Endothelial cell of umbilical vein (primary cell): ENCODE measurements at regions of chr11 and their contacts with region 1.

Region 1: DNA sequence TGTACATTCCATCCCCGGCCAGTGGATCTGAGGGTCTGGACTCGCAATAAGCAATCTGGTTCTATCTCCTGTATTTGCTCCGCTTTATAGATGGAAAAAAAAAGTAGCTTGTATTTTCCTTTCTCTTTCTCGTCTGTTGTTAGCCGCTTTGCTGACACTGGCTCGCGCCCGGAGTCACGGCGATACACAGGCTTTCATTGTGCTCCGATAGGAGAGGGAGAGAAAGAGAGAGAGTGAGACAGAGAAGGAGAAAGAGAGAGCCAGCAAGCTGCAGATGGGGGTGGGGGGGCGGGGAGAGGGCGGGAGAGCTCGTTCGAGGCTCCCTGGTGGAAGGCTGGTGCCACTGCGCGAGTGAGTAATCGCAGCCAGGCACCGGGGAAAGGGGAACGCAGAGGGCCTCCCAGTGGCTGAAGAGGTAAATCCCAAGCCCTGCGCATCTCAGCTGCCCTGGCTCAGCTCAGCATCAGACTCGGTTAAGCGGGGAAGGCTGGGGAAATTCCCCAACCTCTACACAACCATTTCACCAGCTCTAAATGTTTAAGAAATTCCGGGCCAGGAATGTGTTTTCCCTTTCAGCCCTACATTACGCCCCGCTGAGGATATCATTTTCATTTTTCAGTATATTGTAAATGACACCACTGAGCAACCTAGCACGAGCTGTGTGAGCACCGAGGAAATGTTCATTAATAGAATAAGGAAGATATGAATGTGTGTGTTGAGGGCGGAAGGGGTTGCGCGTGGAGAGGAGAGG is at the start of gene MAML2:
- DNase-seq: peak; percentile 91
- H3K4me3 ChIP-seq: peak within 1 kb of the TSS; percentile 59 to 98 (median 94)
- H3K27ac ChIP-seq: peak within 1 kb of the TSS; percentile 88
- H3K4me1 ChIP-seq: peaks cover 30% of the 10 kb centered on the region
- H3K27me3 ChIP-seq: no peaks in the 10 kb centered on the region
- CTCF ChIP-seq: peak; percentile 76 to 96
- POLR2A ChIP-seq: no peak
- total RNA-seq, gene MAML2: 16.8 and 17.1 TPM in 2 replicates

Region 2: DNA sequence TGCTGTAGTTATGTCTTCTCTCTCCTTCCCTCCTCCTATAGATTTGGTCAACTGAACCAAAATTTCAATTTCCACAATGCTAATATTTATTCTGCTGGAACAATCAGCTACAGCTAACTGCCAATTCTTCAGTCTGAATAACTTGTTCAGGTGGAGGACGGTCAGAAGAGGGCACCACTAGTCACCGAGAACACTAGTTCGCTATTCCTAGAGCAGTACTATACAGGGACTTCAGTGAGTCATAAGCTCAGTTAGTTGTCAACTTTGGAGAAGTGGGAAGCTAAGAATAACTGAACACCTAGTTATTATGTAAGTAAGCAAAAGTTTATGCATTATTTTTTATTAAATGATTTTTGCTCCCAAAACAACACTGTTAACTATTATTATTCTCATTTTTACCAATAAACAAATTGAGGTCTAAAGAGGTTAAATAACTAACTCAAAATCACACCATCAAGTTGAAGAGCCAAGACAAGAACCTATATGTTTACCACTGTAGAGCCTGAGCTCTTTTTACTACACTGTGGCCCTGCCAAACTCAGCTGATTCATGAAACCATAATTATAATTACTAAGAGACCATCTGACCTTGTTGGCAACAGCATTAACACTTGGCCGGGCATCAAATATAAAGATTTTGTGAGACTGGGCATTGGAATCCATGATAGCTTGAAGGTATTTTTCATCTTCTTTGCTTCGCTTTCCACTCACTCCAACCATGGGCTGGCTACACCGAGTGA is 493.9 kb before region 1 on chr11:
- CTCF ChIA-PET with region 1: interaction called, 82 read pairs
- POLR2A ChIA-PET with region 1: no interaction called
- dilution Hi-C with region 1: no loop called
- intact Hi-C with region 1: loop called (anchors 1 kb)
- DNase-seq: peak; percentile 82
- H3K4me3 ChIP-seq: no peak overlapping the region
- H3K27ac ChIP-seq: no peak overlapping the region
- H3K4me1 ChIP-seq: no peaks in the 10 kb centered on the region
- H3K27me3 ChIP-seq: no peaks in the 10 kb centered on the region
- CTCF ChIP-seq: peak; percentile 46 to 54
- POLR2A ChIP-seq: no peak

Region 3: DNA sequence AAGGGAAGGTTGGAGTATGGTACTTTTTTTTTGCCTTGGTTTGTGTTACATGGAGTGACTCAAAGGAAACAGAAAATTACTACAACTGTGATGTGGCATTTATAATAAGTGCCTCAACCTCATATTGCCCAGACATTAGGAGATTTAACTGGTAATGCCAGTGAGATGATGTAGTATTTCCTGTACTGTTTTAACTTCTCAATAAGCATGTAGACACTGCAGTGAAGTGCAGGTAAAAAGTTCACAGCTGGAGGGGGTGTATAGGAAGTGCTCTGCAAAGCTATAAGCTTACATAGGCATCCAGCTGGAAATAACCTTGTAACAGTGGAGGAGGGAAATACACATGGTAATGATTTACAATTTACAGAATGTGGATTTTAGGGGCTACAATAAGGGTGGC is 281.0 kb before region 1 on chr11:
- CTCF ChIA-PET with region 1: interaction called, 215 read pairs
- POLR2A ChIA-PET with region 1: interaction called, 6 read pairs
- dilution Hi-C with region 1: no loop called
- intact Hi-C with region 1: no loop called
- DNase-seq: peak; percentile 66
- H3K4me3 ChIP-seq: no peak overlapping the region
- H3K27ac ChIP-seq: peak overlapping the region; percentile 42
- H3K4me1 ChIP-seq: peaks cover 17% of the 10 kb centered on the region
- H3K27me3 ChIP-seq: no peaks in the 10 kb centered on the region
- CTCF ChIP-seq: no peak
- POLR2A ChIP-seq: no peak

Region 4: DNA sequence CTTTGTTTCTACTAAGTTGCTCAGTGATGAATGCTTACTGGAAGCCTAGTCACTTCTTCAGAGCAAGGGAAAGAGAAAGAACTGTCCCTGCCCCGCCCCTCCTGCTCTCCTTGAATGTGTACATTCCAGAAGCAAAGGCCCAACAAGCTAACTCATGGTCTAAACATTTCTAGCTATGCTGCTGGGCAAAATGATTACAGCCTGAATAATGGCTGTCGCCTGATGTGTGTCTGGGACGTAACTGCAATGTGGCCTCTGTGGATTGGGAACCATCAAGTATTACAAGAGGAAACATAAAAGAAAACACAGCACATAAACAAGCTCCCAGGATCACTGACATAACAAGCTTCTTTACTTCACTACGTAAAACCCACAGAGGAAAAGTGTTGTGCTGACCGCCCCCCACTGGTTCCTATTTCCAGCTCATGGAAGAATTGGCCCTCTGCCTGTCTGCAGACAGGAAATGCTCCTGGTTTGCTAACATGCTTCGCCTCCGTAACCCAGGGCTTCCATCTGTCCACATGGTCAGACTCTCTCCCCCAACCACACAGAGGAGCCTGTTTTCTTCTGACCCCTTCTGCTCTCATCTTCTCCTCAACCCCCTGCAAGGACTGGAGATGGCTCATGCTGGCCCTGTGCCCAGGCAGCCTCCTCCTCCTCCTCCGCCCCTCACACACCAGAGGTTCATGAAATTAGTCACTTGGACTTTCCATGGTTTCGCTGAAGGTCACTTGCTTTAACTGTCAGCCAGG is 187.3 kb before region 1 on chr11:
- CTCF ChIA-PET with region 1: interaction called, 8 read pairs
- POLR2A ChIA-PET with region 1: interaction called, 8 read pairs
- dilution Hi-C with region 1: no loop called
- intact Hi-C with region 1: loop called (anchors 1 kb)
- DNase-seq: peak; percentile 92
- H3K4me3 ChIP-seq: no peak overlapping the region
- H3K27ac ChIP-seq: peak overlapping the region; percentile 93
- H3K4me1 ChIP-seq: peaks cover 38% of the 10 kb centered on the region
- H3K27me3 ChIP-seq: no peaks in the 10 kb centered on the region
- CTCF ChIP-seq: peak; percentile 29 to 30
- POLR2A ChIP-seq: no peak

Region 5: GRCh38 chr11:96215110-96215782 is 127.9 kb before region 1 on chr11:
- CTCF ChIA-PET with region 1: interaction called, 28 read pairs
- POLR2A ChIA-PET with region 1: no interaction called
- dilution Hi-C with region 1: no loop called
- intact Hi-C with region 1: no loop called
- DNase-seq: peak; percentile 81
- H3K4me3 ChIP-seq: peak overlapping the region in 1 of 3 experiments; percentile 4
- H3K27ac ChIP-seq: peak overlapping the region; percentile 92
- H3K4me1 ChIP-seq: peaks cover 66% of the 10 kb centered on the region
- H3K27me3 ChIP-seq: no peaks in the 10 kb centered on the region
- CTCF ChIP-seq: no peak
- POLR2A ChIP-seq: peak; percentile 38

Region 6: DNA sequence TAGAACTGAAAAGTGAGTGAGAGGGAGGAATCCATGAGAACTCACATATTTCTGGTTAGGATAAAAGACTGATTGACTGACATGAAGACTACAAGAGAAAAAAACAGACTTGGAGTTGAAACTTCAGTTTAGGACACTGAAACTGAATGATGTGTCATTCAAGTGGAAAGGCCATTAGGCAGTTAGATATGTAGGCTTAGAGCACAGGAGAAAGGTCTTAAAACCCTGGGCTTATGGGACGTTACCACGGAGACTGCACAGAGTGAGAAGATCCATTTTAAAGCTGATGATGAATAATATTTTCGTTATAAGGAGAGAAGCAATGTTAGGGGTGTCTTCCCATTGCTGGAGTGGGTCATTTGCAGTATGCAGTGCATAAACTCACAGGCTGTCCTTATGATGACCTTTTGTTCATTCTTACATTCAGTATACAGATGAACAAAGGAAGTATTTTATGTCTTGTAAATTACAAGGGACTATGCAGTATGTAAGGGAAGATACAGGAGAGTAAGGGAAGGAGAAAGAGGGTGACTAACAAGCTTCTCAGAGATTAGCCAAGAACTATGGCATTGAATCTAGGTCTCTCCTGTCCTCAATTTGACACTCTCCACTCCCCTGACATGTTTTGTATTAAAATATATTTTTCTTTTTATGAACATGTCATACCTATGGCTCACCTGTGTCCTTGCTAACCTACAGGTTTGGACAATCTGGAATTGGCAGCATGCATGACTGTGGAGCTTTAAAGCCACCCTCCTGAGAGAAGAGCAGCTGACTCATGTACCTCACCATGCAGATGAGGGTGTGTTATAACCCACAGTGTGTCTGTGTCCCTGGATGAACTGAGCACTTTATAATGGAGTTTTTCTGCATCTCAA is 63.9 kb before region 1 on chr11:
- CTCF ChIA-PET with region 1: interaction called, 13 read pairs
- POLR2A ChIA-PET with region 1: no interaction called
- dilution Hi-C with region 1: no loop called
- intact Hi-C with region 1: no loop called
- DNase-seq: no peak
- H3K4me3 ChIP-seq: no peak overlapping the region
- H3K27ac ChIP-seq: no peak overlapping the region
- H3K4me1 ChIP-seq: peaks cover 3% of the 10 kb centered on the region
- H3K27me3 ChIP-seq: no peaks in the 10 kb centered on the region
- CTCF ChIP-seq: no peak
- POLR2A ChIP-seq: no peak

Region 7: DNA sequence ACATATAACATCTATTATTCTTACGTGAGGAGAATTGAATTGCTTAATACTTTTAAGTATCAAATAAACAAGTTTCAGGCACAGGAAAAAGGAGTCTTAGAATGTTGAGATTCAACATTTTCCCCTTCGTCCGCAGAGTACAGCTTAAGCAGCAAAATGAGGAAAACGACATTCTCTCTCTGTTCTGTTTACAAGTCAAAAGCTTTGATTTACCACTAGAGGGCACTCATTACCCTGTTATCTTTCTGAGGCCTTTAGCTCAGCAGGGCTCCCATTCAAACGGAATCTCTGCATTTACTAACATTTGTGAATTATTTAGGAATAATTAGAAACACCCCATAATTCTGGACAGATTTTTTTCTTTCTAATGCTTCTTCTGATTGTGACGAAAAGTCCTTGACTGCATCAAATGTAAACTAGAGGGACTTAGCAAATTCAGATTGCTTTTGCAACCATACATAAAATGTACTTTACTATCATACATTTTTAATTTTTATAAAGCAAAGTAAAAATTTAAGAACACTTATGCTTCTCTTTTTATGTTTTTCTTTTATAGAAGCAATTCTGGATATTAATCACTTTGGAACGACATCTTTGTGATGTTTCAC is 121.7 kb after region 1 on chr11:
- CTCF ChIA-PET with region 1: no interaction called
- POLR2A ChIA-PET with region 1: no interaction called
- dilution Hi-C with region 1: no loop called
- intact Hi-C with region 1: no loop called
- DNase-seq: peak; percentile 64
- H3K4me3 ChIP-seq: no peak overlapping the region
- H3K27ac ChIP-seq: no peak overlapping the region
- H3K4me1 ChIP-seq: peaks cover 3% of the 10 kb centered on the region
- H3K27me3 ChIP-seq: no peaks in the 10 kb centered on the region
- CTCF ChIP-seq: peak; percentile 45 to 52
- POLR2A ChIP-seq: no peak